Ascending aorta (tissue), 2 donors: ENCODE measurements at regions of chrX and their contacts with region 1.

Region 1: GRCh38 chrX:134670134-134670924 is 12.1 kb upstream of the PLAC1 start:
- DNase-seq: peak in 1 of 2 donors; percentile 65
- H3K4me3 ChIP-seq: no peak overlapping the region
- H3K27ac ChIP-seq: peak overlapping the region in 1 of 2 donors; percentile 38
- H3K4me1 ChIP-seq: no peaks in the 10 kb centered on the region
- H3K27me3 ChIP-seq: no peaks in the 10 kb centered on the region
- CTCF ChIP-seq: no peak

Region 2: DNA sequence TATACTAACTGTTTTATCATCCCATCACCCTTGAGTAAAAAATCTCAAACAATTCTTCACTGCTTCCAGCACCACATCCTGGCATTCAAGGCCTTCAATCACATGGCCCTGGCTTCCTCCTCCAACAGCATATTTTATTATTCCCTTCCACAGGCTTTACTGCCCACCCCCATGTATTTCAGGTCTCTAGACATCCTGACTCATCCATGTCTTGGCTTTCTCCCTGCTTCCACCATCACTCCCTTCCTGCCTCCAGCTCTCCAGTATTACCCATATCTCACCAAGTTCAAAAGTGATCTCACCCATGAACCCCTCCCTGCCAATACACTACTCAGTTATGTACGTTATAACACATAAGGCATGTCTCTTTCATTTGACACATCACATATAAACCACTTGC is 22.7 kb after region 1 on chrX:
- intact Hi-C with region 1: loop called (anchors 1 kb)
- DNase-seq: no peak
- H3K4me3 ChIP-seq: no peak overlapping the region
- H3K27ac ChIP-seq: no peak overlapping the region
- H3K4me1 ChIP-seq: no peaks in the 10 kb centered on the region
- H3K27me3 ChIP-seq: no peaks in the 10 kb centered on the region
- CTCF ChIP-seq: no peak

Region 3: DNA sequence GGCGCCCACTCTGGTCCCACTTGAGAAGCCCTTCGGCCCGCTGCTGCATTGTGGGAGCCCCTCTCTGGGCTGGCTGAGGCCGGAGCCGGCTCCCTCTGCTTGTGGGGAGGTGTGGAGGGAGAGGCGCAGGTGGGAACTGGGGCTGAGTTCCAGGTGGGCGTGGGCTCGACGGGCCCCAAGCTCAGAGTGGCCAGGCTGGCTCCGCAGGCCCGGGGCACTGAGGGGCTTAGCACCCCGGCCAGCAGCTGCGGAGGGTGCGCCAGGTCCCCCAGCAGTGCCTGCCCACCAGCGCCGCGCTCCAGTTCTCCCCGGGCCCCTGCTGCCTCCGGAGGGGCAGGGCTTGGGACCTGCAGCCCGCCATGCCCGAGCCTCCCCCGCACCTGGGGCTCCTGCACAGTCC is 255.2 kb after region 1 on chrX:
- intact Hi-C with region 1: no loop called
- DNase-seq: no peak
- H3K4me3 ChIP-seq: no peak overlapping the region
- H3K27ac ChIP-seq: no peak overlapping the region
- H3K4me1 ChIP-seq: no peaks in the 10 kb centered on the region
- H3K27me3 ChIP-seq: no peaks in the 10 kb centered on the region
- CTCF ChIP-seq: no peak